ENCODE measurements at regions of chr1 and their contacts with region 1.

Region 1: DNA sequence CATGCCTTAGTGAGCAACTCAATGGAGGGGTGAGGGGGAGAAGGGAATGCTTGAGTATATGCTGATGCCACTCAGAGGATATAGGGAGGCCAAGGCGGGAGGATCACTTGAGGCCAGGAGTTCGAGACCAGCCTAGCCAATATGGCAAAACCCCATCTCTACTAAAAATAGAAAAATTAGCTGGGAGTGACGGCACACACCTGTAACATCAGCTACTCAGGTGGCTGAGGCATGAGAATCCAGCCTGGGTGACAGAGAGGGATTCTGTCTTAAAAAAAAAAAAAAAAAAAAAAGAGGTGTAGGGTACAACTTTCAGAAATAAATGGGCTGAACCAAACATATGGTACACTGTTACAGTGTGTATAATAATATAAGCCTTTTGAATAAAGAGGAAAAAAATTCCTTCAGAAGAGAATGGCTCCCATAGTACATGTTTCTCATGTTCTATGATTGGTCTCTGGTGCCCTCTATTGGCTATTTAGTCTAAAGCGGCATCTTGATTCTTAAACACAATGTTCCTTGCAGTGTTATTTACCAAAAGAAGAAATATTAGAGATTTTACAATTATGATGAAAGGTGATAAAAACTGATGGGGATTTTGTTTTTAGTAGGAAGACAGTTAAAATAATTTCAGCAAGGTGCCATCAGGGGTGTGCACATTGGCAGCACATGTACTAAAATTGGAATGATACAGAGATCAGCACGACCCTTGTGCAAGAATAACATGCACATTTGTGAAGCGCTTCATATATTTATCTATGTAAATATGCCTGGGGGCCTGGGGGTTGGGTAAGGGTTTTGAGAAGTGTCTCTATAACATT is 109.8 kb downstream of the PATJ start:
- DNase-seq: peak in 7 of 9 donors; percentile 19 to 61 (median 56)
- ATAC-seq: peak; percentile 68
- H3K4me3 ChIP-seq: no peak overlapping the region
- H3K4me3 Mint-ChIP-seq: no peak overlapping the region
- H3K27ac ChIP-seq: no peak overlapping the region
- H3K27ac Mint-ChIP-seq: peak overlapping the region in 2 of 9 donors; percentile 3 to 32
- H3K4me1 ChIP-seq: no peaks in the 10 kb centered on the region
- H3K4me1 Mint-ChIP-seq: peaks cover 0 to 3% (median 0%) of the 10 kb centered on the region in 7 donors
- H3K27me3 ChIP-seq: no peaks in the 10 kb centered on the region
- H3K27me3 Mint-ChIP-seq: no peaks in the 10 kb centered on the region

Region 2: DNA sequence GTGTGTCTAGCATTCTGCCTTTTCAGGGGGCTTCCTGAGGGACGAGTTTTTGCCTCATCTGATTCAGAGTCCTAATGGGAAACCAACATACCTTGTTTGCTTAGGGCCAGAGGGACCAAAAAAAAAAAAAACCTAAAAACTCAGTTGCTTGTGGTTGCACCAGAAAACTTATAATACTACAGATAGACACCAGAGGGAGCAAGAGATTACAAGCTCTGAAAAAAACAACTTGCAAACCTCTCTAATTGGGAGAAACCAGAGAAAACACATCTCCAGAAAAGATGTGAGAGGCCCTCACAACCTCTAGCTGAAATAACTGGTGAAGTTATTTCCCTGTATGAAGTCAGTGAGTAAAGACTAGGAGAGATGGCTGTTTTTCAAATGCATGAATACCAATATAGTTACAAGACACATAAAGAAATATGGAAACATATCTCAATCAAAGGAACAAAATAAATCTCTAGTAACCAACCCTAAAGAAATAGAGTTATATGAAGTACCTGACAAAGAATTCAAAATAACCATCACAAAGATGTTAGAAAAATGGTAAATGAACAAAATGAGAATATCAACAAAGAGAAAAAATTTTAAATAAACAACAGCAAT is 1003.4 kb before region 1 on chr1:
- CTCF ChIA-PET with region 1: no interaction called
- POLR2A ChIA-PET with region 1: no interaction called
- intact Hi-C with region 1: loop called (anchors 5 kb)
- DNase-seq: no peak
- ATAC-seq: no peak
- H3K4me3 ChIP-seq: no peak overlapping the region
- H3K4me3 Mint-ChIP-seq: no peak overlapping the region
- H3K27ac ChIP-seq: no peak overlapping the region
- H3K27ac Mint-ChIP-seq: no peak overlapping the region
- H3K4me1 ChIP-seq: no peaks in the 10 kb centered on the region
- H3K4me1 Mint-ChIP-seq: no peaks in the 10 kb centered on the region
- H3K27me3 ChIP-seq: no peaks in the 10 kb centered on the region
- H3K27me3 Mint-ChIP-seq: peaks cover 6 to 32% (median 28%) of the 10 kb centered on the region in 5 donors

Region 3: GRCh38 chr1:61049850-61050540 is 802.1 kb before region 1 on chr1:
- CTCF ChIA-PET with region 1: interaction called, 3 read pairs
- POLR2A ChIA-PET with region 1: no interaction called
- intact Hi-C with region 1: loop called (anchors 1 to 5 kb)
- DNase-seq: peak; percentile 69 to 93 (median 84)
- ATAC-seq: peak; percentile 95
- H3K4me3 ChIP-seq: peak overlapping the region; percentile 64
- H3K4me3 Mint-ChIP-seq: peak overlapping the region; percentile 69 to 88 (median 80)
- H3K27ac ChIP-seq: no peak overlapping the region
- H3K27ac Mint-ChIP-seq: peak overlapping the region in 1 of 9 donors; percentile 38
- H3K4me1 ChIP-seq: peaks cover 10 to 15% of the 10 kb centered on the region in 2 donors
- H3K4me1 Mint-ChIP-seq: peaks cover 17 to 37% (median 26%) of the 10 kb centered on the region in 7 donors
- H3K27me3 ChIP-seq: peaks cover 4 to 6% of the 10 kb centered on the region in 2 donors
- H3K27me3 Mint-ChIP-seq: peaks cover 39 to 61% (median 45%) of the 10 kb centered on the region in 5 donors

Region 4: GRCh38 chr1:61552630-61553305 is 299.3 kb before region 1 on chr1:
- CTCF ChIA-PET with region 1: no interaction called
- POLR2A ChIA-PET with region 1: no interaction called
- intact Hi-C with region 1: loop called (anchors 1 kb)
- DNase-seq: no peak
- ATAC-seq: no peak
- H3K4me3 ChIP-seq: no peak overlapping the region
- H3K4me3 Mint-ChIP-seq: no peak overlapping the region
- H3K27ac ChIP-seq: no peak overlapping the region
- H3K27ac Mint-ChIP-seq: no peak overlapping the region
- H3K4me1 ChIP-seq: no peaks in the 10 kb centered on the region
- H3K4me1 Mint-ChIP-seq: no peaks in the 10 kb centered on the region
- H3K27me3 ChIP-seq: peaks cover 0 to 4% of the 10 kb centered on the region in 2 donors
- H3K27me3 Mint-ChIP-seq: peaks cover 16 to 42% (median 37%) of the 10 kb centered on the region in 5 donors

Region 5: GRCh38 chr1:61724813-61725694 is 127.0 kb before region 1 on chr1 and contains the start of gene TM2D1:
- CTCF ChIA-PET with region 1: no interaction called
- POLR2A ChIA-PET with region 1: no interaction called
- intact Hi-C with region 1: loop called (anchors 5 to 10 kb)
- DNase-seq: peak; percentile 72 to 89 (median 81)
- ATAC-seq: peak; percentile 98
- H3K4me3 ChIP-seq: peak within 1 kb of the TSS; percentile 96
- H3K4me3 Mint-ChIP-seq: peak within 1 kb of the TSS; percentile 86 to 99 (median 96)
- H3K27ac ChIP-seq: peak within 1 kb of the TSS; percentile 92
- H3K27ac Mint-ChIP-seq: peak within 1 kb of the TSS; percentile 94 to 99 (median 97)
- H3K4me1 ChIP-seq: peaks cover 13 to 17% of the 10 kb centered on the region in 2 donors
- H3K4me1 Mint-ChIP-seq: peaks cover 16 to 44% (median 39%) of the 10 kb centered on the region in 7 donors
- H3K27me3 ChIP-seq: no peaks in the 10 kb centered on the region
- H3K27me3 Mint-ChIP-seq: no peaks in the 10 kb centered on the region
- total RNA-seq, gene TM2D1: 26.8 to 57.6 (median 41.1) TPM